Astrocyte of the cerebellum (primary cell): ENCODE measurements at regions of chr1 and their contacts with region 1.

Region 1: DNA sequence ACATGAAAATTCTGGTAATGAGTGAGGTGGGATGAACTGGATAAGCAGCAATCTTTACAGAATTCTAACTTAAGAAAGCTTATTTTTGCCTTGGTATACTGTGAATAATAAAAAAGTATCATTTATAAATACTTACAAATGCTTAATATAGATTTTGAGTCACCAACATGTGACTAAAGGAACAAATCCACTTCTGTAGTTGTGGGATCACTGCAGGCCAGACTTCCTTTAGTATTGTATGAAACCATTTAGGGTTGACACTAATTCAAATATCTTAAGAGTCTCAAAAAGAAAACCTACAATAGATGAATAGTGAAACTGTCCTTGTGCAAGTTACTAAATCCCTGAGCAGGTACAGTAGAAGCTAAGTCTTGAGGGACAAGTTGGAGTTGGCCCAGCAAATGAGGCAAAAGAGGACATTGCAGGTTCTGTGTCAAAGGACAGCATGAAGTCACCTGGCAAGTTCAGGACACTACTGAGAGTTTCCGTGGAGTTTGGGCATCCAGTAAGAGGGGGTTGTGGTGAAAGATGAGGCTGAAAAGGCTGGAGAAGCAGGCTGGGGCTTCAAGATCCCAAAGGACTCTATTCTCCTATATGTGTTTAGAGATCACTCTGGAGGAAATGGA is 5.9 kb upstream of the THEM4 start:
- DNase-seq: no peak
- H3K4me3 ChIP-seq: no peak overlapping the region
- CTCF ChIP-seq: no peak

Region 2: GRCh38 chr1:151888972-151889570 is 26.1 kb before region 1 on chr1:
- in situ Hi-C with region 1: no loop called
- DNase-seq: no peak
- H3K4me3 ChIP-seq: no peak overlapping the region
- CTCF ChIP-seq: no peak

Region 3: DNA sequence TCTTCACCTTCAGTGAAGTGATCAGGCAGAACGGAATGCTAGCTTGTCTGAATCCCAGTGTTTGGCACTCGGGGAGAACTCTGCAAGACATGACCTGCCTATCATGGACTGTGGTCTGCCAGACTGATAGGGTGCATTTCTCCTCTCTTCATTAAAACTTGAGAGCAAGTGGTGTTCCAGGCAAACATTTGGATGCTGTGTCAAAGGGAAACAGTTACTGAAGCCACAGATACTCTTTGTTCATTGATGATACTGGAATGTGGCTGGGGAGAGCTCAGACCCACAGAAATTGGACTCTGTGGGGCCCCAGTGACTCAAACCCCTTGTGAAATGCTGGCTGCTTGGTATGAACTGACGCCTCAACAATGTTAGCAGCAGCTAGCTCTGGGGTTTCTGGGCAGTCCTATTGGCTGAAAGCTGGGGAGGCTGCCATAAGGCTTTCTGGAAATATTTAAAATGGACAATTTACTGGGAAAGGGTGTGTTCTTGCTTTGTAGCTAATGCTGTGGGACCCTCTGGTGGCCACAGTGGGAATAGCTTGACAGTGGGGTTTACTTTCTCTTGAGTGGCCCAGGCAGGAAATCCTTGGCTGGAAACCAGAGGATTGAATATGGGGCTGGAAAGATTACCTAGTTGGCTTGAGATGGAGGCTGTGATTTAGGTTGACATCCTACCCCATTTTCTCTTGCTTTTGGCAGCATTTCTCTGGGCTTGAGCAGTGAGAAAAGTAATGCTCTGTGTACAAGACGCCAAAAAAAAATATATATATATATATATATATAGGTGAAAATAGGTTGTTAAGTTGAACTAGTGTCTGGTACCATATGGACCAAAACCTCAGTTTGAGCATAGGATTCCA is 86.4 kb after region 1 on chr1:
- in situ Hi-C with region 1: loop called (anchors 5 kb)
- DNase-seq: peak; percentile 98
- H3K4me3 ChIP-seq: no peak overlapping the region
- CTCF ChIP-seq: peak; percentile 98

Region 4: GRCh38 chr1:152198982-152199381 is 283.8 kb after region 1 on chr1:
- in situ Hi-C with region 1: no loop called
- DNase-seq: no peak
- H3K4me3 ChIP-seq: no peak overlapping the region
- CTCF ChIP-seq: no peak